ENCODE measurements at regions of chrX and their contacts with region 1.

Region 1: DNA sequence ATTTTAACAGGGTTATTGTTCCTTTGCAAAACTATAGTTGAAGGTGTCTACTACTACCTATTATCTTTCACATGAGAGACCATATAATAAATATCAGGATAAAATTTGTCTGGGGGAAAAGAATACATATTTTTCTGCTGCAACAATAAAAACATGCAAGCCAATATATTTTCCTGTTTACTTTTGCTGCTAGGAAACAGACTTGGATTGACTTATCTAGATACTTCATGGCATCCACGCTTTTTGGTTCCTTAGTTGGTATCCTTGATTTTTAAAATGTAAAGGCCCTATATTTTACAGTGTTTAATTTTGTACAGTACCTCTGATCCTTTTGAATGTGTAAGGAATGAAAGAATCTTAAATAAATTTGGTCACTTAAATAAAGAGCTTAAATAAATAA is 150.6 kb downstream of the GPC3 start:
- DNase-seq: no peak
- ATAC-seq: no peak
- H3K4me3 ChIP-seq: no peak overlapping the region
- H3K27ac ChIP-seq: no peak overlapping the region
- H3K4me1 ChIP-seq: no peaks in the 10 kb centered on the region
- H3K27me3 ChIP-seq: peaks cover 0 to 5% (median 0%) of the 10 kb centered on the region in 3 donors
- CTCF ChIP-seq: no peak

Region 2: DNA sequence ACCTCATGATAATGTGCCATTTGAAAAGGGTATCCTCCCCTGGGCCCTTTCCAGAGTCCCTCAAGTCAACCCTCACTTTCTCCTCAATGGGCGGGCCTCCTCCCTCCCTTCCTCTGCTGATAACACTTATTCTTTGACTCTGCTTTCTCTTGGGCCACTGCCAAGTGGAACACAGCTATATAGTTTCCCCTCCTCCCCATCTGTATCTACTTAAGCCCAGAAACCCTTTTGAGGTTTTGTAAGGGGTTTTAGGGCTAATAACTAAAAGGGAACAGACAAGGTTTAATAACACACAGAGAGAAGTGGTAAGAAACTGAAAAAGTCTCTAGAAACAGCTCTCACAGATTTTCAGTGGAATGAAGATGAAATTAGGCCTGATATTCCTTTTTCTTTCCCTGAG is 33.9 kb after region 1 on chrX:
- intact Hi-C with region 1: loop called in 1 of 2 experiments (anchors 1 kb)
- DNase-seq: no peak
- ATAC-seq: no peak
- H3K4me3 ChIP-seq: no peak overlapping the region
- H3K27ac ChIP-seq: no peak overlapping the region
- H3K4me1 ChIP-seq: no peaks in the 10 kb centered on the region
- H3K27me3 ChIP-seq: peaks cover 0 to 9% (median 0%) of the 10 kb centered on the region in 3 donors
- CTCF ChIP-seq: no peak

Region 3: GRCh38 chrX:134246282-134246681 is 411.5 kb after region 1 on chrX:
- intact Hi-C with region 1: no loop called
- DNase-seq: no peak
- ATAC-seq: no peak
- H3K4me3 ChIP-seq: no peak overlapping the region
- H3K27ac ChIP-seq: no peak overlapping the region
- H3K4me1 ChIP-seq: no peaks in the 10 kb centered on the region
- H3K27me3 ChIP-seq: no peaks in the 10 kb centered on the region
- CTCF ChIP-seq: no peak

Region 4: DNA sequence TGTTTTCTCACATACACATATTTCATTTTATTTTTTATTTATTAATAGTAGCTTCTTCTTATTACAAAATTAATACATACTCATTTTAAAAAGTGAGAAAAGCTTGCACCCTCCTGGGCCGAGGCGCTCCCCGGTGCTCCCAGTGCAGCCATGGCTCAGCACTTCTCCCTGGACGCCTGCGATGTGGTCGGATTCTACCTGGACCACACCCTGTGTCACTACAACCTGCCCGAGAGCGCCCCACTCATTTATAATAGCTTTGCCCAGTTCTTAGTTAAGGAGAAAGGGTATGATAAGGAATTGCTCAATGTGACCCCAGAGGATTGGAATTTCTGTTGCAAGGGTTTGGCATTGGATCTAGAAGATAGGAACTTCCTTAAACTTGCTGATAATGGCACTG is 437.4 kb after region 1 on chrX:
- intact Hi-C with region 1: no loop called
- DNase-seq: no peak
- ATAC-seq: no peak
- H3K4me3 ChIP-seq: no peak overlapping the region
- H3K27ac ChIP-seq: no peak overlapping the region
- H3K4me1 ChIP-seq: no peaks in the 10 kb centered on the region
- H3K27me3 ChIP-seq: no peaks in the 10 kb centered on the region
- CTCF ChIP-seq: no peak